ENCODE measurements at regions of chr11 and their contacts with region 1.

Region 1: DNA sequence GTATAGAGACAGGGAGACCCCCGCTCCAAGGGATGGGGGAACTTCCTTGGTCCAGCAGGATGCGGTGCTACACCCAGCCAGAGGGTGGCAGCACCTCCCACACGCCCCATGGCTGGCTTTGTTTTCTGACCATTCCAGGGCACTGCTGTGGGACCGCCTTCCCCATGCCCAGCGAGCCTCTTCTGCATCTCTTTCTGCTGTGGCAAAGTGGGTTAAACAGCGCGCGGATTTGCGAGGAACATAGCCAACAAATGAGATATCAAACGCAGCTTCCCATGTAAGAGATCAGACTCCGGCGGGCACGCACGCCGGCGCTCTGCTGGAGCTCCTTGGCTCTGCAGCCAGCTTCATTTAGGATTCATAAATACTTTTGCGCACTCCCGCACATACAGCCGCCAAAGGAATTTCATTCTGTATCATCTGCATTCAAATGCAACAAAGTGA is 485.8 kb upstream of the CADM1 start:
- DNase-seq: no peak
- ATAC-seq: peak in 2 of 4 donors; percentile 57 to 68
- H3K4me3 ChIP-seq: no peak overlapping the region
- H3K27ac ChIP-seq: no peak overlapping the region
- H3K4me1 ChIP-seq: no peaks in the 10 kb centered on the region
- H3K27me3 ChIP-seq: peaks cover 0 to 10% (median 0%) of the 10 kb centered on the region in 3 donors
- CTCF ChIP-seq: peak; percentile 45

Region 2: GRCh38 chr11:116052603-116053547 is 62.8 kb after region 1 on chr11:
- intact Hi-C with region 1: no loop called
- DNase-seq: no peak
- ATAC-seq: no peak
- H3K4me3 ChIP-seq: no peak overlapping the region
- H3K27ac ChIP-seq: no peak overlapping the region
- H3K4me1 ChIP-seq: no peaks in the 10 kb centered on the region
- H3K27me3 ChIP-seq: peaks cover 4 to 9% (median 6%) of the 10 kb centered on the region in 3 donors
- CTCF ChIP-seq: no peak

Region 3: DNA sequence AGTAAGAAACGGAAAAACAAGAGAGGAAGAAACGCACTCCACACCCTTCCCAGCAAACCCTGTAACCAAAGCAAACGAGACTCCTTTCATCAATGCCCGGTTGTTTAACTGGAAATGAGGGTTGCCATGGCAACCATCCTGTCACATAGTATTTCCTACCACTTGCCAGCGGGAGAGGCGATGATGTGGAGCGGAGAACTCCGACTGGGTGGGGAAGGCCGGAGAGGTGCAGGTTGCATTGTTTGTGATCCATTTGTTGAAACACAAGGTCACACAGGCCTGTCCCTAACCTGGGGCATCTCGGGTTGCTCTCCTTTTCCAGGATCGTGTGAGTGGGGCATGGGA is 172.8 kb after region 1 on chr11:
- intact Hi-C with region 1: no loop called
- DNase-seq: no peak
- ATAC-seq: no peak
- H3K4me3 ChIP-seq: no peak overlapping the region
- H3K27ac ChIP-seq: no peak overlapping the region
- H3K4me1 ChIP-seq: no peaks in the 10 kb centered on the region
- H3K27me3 ChIP-seq: peaks cover 0 to 11% (median 6%) of the 10 kb centered on the region in 3 donors
- CTCF ChIP-seq: no peak

Region 4: GRCh38 chr11:116276051-116277044 is 286.3 kb after region 1 on chr11:
- intact Hi-C with region 1: loop called (anchors 5 to 10 kb)
- DNase-seq: peak; percentile 72 to 83
- ATAC-seq: peak; percentile 70 to 90 (median 80)
- H3K4me3 ChIP-seq: peak overlapping the region; percentile 49
- H3K27ac ChIP-seq: no peak overlapping the region
- H3K4me1 ChIP-seq: no peaks in the 10 kb centered on the region
- H3K27me3 ChIP-seq: peaks cover 0 to 18% (median 2%) of the 10 kb centered on the region in 3 donors
- CTCF ChIP-seq: peak; percentile 96